Panc1 (cell line): ENCODE measurements at regions of chr3 and their contacts with region 1.

Region 1: DNA sequence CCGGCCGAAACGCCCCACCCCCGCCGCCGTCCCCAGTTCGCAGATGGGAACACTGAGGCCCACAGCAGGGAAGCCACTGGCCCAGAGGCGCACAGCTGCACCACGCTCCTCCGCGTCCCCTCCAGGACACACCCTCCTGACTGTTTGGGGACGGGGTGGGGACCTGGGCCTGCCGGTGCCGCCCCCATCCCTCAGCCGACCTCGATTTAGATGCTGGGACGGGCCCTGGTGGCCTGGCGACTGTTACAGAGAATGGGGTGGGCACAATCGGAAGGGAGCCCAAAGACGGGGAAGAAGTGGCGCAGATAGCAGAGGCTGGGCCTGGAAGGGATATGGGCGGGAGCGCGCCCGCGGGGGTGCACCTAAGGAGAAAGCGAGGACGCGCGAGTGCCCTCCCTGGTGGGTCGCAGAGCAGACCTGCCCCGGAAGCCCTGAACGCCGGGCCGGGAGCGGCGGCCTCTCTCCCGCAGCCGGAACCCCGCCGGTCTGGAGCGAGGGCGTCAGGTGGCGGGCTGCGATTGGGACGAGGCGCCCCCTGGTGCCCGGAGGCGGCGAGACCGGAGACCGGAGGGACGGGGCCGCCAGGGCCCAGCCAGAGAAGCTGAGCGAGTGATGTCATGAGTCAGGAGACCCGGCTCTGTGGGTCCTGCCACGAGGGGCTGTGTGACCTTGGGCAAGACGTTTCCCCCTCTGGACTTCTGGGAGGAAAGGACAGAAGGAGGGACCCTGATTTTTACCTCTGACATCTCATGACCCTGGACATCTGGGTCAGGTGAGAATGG is 78.4 kb downstream of the IQSEC1 start:
- DNase-seq: peak; percentile 20
- ATAC-seq: peak; percentile 80
- H3K4me3 ChIP-seq: peak overlapping the region; percentile 61 to 68
- H3K27ac ChIP-seq: peak overlapping the region; percentile 44
- H3K4me1 ChIP-seq: peaks cover 16% of the 10 kb centered on the region
- H3K27me3 ChIP-seq: no peaks in the 10 kb centered on the region
- CTCF ChIP-seq: peak; percentile 94

Region 2: GRCh38 chr3:12868039-12869034 is 126.5 kb before region 1 on chr3:
- CTCF ChIA-PET with region 1: no interaction called
- POLR2A ChIA-PET with region 1: no interaction called
- in situ Hi-C with region 1: no loop called
- intact Hi-C with region 1: loop called (anchors 10 kb)
- DNase-seq: peak; percentile 59
- ATAC-seq: peak; percentile 94
- H3K4me3 ChIP-seq: no peak overlapping the region
- H3K27ac ChIP-seq: no peak overlapping the region
- H3K4me1 ChIP-seq: no peaks in the 10 kb centered on the region
- H3K27me3 ChIP-seq: no peaks in the 10 kb centered on the region
- CTCF ChIP-seq: peak; percentile 90